ENCODE measurements at regions of chr3 and their contacts with region 1.

Region 1: DNA sequence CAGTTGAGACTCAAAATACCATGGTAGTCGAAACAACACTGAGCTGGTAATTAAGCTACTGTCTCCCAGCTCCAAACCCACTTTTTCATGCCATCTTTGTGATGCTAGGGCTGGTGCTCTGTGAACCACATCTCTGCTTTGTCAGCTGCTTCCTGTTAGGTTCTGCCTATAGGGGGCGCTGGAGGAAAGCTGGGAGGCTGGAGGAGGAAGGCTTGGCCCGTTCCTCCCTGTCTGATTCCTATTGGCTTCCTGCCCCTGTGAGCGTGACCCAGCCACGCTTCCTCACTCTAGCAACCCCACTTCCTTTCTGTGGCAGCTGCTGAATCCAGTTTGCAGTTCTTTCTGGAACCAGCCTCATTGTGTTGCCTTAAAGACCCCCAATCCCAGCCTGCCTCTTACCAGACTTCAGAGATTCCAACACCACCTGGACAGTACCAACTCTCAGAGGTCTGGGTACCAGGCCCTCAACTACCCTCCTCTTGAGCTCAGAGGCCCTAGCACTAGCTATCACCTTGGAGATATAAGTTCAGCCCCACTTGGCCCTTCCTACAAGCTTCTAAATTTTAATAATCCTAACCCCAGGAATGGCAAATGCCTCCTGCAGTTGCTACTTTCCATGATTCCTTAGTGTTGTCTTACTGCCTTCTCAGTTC is 120.9 kb downstream of the ERC2 start:
- DNase-seq: peak in 1 of 2 donors; percentile 5
- ATAC-seq: peak in 1 of 8 donors; percentile 33
- H3K4me3 ChIP-seq: no peak overlapping the region
- H3K27ac ChIP-seq: no peak overlapping the region
- H3K4me1 ChIP-seq: no peaks in the 10 kb centered on the region
- H3K27me3 ChIP-seq: peaks cover 0 to 12% (median 0%) of the 10 kb centered on the region in 7 donors
- CTCF ChIP-seq: peak in 5 of 9 donors; percentile 22 to 39 (median 30)

Region 2: DNA sequence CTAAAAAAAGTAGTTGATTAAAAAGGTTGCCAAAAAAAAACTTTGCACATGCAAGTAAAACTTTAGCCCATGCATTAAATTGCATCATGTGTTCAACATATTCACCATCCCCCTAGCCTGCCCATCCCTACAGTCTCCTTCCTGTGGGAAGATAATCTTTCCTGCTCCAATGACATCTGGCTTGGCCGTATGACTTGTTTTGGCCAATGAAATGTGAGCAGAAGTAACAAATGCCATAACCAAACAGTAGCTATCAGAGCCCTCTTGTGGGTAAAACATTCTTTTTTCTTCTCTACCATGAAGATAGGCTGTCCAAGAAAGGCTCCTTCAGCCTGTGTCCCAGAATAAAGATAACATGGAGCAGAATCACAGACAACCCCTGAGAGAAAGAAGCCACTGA is 105.7 kb after region 1 on chr3:
- intact Hi-C with region 1: loop called in 3 of 10 experiments (anchors 5 kb)
- DNase-seq: no peak
- ATAC-seq: no peak
- H3K4me3 ChIP-seq: no peak overlapping the region
- H3K27ac ChIP-seq: no peak overlapping the region
- H3K4me1 ChIP-seq: no peaks in the 10 kb centered on the region
- H3K27me3 ChIP-seq: peaks cover 0 to 11% (median 0%) of the 10 kb centered on the region in 7 donors
- CTCF ChIP-seq: no peak

Region 3: GRCh38 chr3:56494686-56495322 is 147.5 kb after region 1 on chr3:
- intact Hi-C with region 1: loop called in 5 of 10 experiments (anchors 5 to 10 kb)
- DNase-seq: peak; percentile 60 to 86
- ATAC-seq: peak; percentile 55 to 87 (median 84)
- H3K4me3 ChIP-seq: no peak overlapping the region
- H3K27ac ChIP-seq: no peak overlapping the region
- H3K4me1 ChIP-seq: no peaks in the 10 kb centered on the region
- H3K27me3 ChIP-seq: peaks cover 0 to 27% (median 0%) of the 10 kb centered on the region in 7 donors
- CTCF ChIP-seq: peak; percentile 73 to 93 (median 89)

Measured in heart right ventricle (tissue), 16 donors.